ENCODE measurements at regions of chr11 and their contacts with region 1.

Region 1: GRCh38 chr11:104668797-104669463 is 229.3 kb downstream of the CASP12 start:
- DNase-seq: no peak
- H3K4me3 Mint-ChIP-seq: no peak overlapping the region
- H3K27ac Mint-ChIP-seq: no peak overlapping the region
- H3K4me1 Mint-ChIP-seq: peaks cover 9% of the 10 kb centered on the region
- H3K27me3 Mint-ChIP-seq: no peaks in the 10 kb centered on the region

Region 2: DNA sequence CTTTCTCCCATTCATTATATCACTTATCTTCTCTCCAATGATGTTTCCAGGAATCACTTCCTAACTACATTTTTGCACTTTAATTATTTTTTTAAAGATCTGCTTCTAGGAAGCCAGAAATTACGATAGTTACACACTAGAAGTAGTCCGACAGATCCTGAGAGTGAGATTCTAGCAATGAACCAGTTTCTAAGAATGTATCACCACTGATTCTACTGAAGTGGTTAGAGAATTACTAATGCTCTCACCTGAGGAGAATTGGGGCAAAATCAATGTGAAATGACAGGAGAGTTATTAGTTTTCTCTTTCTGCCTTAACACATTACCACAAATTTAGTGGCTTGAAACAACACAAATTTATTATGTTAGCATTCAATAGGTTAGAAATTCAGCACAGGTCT is 11.8 kb before region 1 on chr11:
- CTCF ChIA-PET with region 1: interaction called, 3 read pairs
- POLR2A ChIA-PET with region 1: no interaction called
- intact Hi-C with region 1: loop called (anchors 1 kb)
- DNase-seq: no peak
- H3K4me3 Mint-ChIP-seq: no peak overlapping the region
- H3K27ac Mint-ChIP-seq: no peak overlapping the region
- H3K4me1 Mint-ChIP-seq: peaks cover 28% of the 10 kb centered on the region
- H3K27me3 Mint-ChIP-seq: no peaks in the 10 kb centered on the region

Region 3: GRCh38 chr11:105236664-105237063 is 567.7 kb after region 1 on chr11:
- CTCF ChIA-PET with region 1: no interaction called
- POLR2A ChIA-PET with region 1: no interaction called
- intact Hi-C with region 1: no loop called
- DNase-seq: no peak
- H3K4me3 Mint-ChIP-seq: no peak overlapping the region
- H3K27ac Mint-ChIP-seq: no peak overlapping the region
- H3K4me1 Mint-ChIP-seq: no peaks in the 10 kb centered on the region
- H3K27me3 Mint-ChIP-seq: peaks cover 2% of the 10 kb centered on the region

Measured in activated CD4-positive, alpha-beta memory T cell treated with anti-CD3 and anti-CD28 coated beads for 36 hours (primary cell).